Activated CD4-positive, alpha-beta memory T cell treated with anti-CD3 and anti-CD28 coated beads for 36 hours (primary cell): ENCODE measurements at regions of chr3 and their contacts with region 1.

Region 1: DNA sequence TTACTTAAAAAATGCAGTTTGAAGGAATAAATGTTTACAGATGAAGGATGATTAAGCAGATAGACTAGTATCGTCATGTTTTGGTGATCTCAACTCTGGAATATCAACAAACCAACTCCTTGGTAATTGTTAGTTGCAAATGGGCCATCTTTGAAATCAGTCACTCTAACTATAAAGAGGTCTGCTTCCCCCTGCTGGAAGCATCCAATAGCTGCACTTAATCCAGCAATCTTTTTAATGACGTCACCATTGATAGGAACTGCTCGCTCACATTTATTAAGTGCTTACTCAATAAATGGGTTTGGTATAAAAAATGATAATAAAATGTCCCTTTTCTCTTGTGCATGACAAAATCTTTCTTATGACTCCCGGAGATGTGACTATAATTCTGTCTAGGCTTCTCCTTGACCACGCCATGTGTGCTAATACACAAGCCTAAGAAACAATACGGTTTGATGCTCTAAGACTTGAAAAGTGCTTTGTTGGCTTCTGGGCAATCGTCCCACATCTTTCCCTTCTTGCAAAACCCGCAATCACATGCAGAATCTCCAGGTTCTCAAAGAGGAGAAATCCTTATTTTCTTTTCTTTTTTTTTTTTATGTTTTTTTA is 227.6 kb upstream of the POU1F1 start:
- DNase-seq: peak; percentile 10
- H3K4me3 Mint-ChIP-seq: no peak overlapping the region
- H3K27ac Mint-ChIP-seq: no peak overlapping the region
- H3K4me1 Mint-ChIP-seq: no peaks in the 10 kb centered on the region
- H3K27me3 Mint-ChIP-seq: no peaks in the 10 kb centered on the region

Region 2: DNA sequence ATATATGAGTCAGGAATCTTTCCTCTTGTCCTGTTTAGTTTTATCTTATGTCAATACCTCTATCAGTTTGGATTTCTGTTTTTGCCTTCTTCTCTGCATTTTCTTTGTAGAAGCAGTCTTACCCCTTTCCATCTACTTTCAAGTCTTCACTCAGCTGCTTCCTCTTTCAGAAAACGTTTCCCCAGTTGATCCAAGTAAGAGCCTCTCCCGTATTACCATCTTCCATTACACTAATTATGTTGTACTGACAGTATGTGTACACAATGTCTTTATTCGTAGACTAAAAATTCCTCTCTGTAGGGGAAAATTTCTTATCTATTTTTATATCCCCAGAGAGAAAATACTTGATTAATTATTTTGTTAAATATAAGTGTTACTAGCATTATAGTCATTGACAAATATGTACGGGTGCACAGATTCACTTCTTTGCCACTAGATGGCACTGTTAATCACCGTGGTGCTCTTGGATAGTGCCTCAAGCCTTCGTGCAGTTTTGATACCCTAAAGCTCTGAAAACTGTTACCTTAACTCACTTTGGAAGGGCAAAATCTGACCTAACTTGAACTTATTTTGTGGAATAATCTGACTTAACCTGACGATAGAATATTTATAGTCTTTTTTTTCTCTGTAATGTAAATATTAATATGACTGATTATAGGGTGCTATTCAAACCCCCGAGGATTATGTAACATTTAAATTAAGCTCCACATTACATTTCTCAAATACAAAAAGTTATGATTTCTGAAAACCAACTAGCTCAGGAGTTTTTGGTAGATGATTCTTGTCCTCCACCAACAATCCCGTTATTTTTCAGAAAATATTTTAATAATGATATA is 153.4 kb before region 1 on chr3:
- CTCF ChIA-PET with region 1: interaction called, 15 read pairs
- POLR2A ChIA-PET with region 1: no interaction called
- intact Hi-C with region 1: loop called (anchors 1 kb)
- DNase-seq: peak; percentile 16
- H3K4me3 Mint-ChIP-seq: no peak overlapping the region
- H3K27ac Mint-ChIP-seq: no peak overlapping the region
- H3K4me1 Mint-ChIP-seq: no peaks in the 10 kb centered on the region
- H3K27me3 Mint-ChIP-seq: no peaks in the 10 kb centered on the region